Ovary (tissue), 10 donors: ENCODE measurements at regions of chr3 and their contacts with region 1.

Region 1: DNA sequence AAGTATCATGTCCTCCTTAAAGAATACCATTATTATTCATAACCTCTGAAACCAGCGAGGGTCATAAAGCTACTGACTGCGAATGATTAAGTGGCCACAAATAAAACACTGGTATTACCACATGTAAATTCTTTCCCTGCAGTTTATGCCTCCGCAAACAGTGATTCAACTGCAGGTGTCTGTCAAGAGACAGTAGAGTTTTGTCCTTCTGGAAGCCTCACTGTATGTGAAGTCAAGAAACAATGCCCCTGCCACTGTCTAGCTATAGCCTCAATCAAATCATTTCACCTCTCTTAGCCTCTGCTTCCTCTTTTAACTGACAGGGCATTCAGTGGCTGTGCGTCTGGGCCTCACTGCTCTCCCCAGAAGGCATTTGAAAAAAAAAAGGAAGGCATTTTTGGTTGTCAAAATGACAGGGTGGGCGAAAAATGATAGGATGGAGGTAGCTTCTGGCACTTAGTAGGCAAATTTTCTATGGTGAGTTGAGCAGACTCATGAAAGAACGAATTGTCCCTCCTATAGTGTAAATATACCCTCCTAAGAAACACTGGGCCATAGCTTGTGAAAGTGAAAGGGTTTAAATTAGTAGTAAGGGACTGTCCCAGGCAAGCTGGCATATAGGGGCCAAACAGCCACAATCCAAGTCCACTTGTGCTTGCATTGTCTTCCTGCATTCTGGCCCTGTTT is 66.7 kb downstream of the FILIP1L start:
- DNase-seq: no peak
- H3K4me3 ChIP-seq: no peak overlapping the region
- H3K27ac ChIP-seq: no peak overlapping the region
- H3K4me1 ChIP-seq: peaks cover 4% of the 10 kb centered on the region
- H3K27me3 ChIP-seq: no peaks in the 10 kb centered on the region
- CTCF ChIP-seq: no peak
- EP300 ChIP-seq: no peak
- POLR2A ChIP-seq: no peak

Region 2: GRCh38 chr3:99859825-99860224 is 187.8 kb before region 1 on chr3:
- intact Hi-C with region 1: loop called in 1 of 4 experiments (anchors 10 kb)
- DNase-seq: no peak
- H3K4me3 ChIP-seq: no peak overlapping the region
- H3K27ac ChIP-seq: peak overlapping the region in 1 of 2 donors; percentile 44
- H3K4me1 ChIP-seq: peaks cover 12% of the 10 kb centered on the region
- H3K27me3 ChIP-seq: no peaks in the 10 kb centered on the region
- CTCF ChIP-seq: no peak
- EP300 ChIP-seq: no peak
- POLR2A ChIP-seq: no peak

Region 3: GRCh38 chr3:100150473-100150872 is 102.9 kb after region 1 on chr3:
- intact Hi-C with region 1: no loop called
- DNase-seq: no peak
- H3K4me3 ChIP-seq: no peak overlapping the region
- H3K27ac ChIP-seq: peak overlapping the region in 1 of 2 donors; percentile 64
- H3K4me1 ChIP-seq: peaks cover 6% of the 10 kb centered on the region
- H3K27me3 ChIP-seq: no peaks in the 10 kb centered on the region
- CTCF ChIP-seq: no peak
- EP300 ChIP-seq: no peak
- POLR2A ChIP-seq: no peak